Activated T-helper 1 cell treated with anti-CD3 and anti-CD28 coated beads, Interleukin-12 subunit alpha, Interleukin-12 subunit beta, Interleukin-2, Interleukin-4 antibody, amounts not matched to agents 30 ng/mL and 10 ng/mL and 1 ng/mL, durations not matched to agents 14 hours and 24 hours and 36 hours (primary cell): ENCODE measurements at regions of chr2 and their contacts with region 1.

Region 1: GRCh38 chr2:222707689-222708525 is 36.4 kb downstream of the MOGAT1 start:
- DNase-seq: peak; percentile 55
- H3K4me3 Mint-ChIP-seq: no peak overlapping the region
- H3K27ac Mint-ChIP-seq: no peak overlapping the region
- H3K4me1 Mint-ChIP-seq: peaks cover 11% of the 10 kb centered on the region
- H3K27me3 Mint-ChIP-seq: peaks cover 30% of the 10 kb centered on the region

Region 2: DNA sequence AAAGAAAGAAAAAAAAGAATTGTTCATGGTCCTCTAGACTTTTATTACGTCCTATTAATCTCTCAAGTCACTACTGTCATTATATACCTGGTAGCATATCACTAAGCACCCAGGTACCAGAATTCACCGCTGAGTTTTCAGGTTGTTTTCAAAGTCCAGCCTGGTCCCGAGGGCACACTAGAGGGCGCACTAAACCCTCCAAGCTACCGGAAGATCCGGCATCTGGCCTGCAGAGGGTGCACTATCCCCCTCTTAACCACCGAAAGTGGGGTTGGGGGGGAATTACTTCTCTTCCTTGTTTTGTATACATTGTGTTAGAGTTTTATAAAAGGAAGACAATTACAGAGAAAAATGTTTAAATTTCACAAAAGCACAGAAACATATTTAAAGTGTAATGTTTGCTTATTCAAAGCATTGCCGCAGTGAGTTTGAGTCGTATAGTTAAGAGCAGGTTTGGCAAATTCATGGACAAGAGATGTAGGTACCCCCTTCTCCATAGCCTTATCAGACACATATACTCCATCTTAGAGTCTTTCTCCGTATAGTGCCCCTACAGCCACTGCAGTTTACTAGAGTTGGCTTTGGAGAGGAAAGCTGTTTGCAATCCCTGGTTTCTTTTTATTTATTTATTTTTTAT is 17.2 kb before region 1 on chr2:
- intact Hi-C with region 1: loop called (anchors 1 kb)
- DNase-seq: peak; percentile 59
- H3K4me3 Mint-ChIP-seq: no peak overlapping the region
- H3K27ac Mint-ChIP-seq: no peak overlapping the region
- H3K4me1 Mint-ChIP-seq: peaks cover 5% of the 10 kb centered on the region
- H3K27me3 Mint-ChIP-seq: peaks cover 8% of the 10 kb centered on the region

Region 3: DNA sequence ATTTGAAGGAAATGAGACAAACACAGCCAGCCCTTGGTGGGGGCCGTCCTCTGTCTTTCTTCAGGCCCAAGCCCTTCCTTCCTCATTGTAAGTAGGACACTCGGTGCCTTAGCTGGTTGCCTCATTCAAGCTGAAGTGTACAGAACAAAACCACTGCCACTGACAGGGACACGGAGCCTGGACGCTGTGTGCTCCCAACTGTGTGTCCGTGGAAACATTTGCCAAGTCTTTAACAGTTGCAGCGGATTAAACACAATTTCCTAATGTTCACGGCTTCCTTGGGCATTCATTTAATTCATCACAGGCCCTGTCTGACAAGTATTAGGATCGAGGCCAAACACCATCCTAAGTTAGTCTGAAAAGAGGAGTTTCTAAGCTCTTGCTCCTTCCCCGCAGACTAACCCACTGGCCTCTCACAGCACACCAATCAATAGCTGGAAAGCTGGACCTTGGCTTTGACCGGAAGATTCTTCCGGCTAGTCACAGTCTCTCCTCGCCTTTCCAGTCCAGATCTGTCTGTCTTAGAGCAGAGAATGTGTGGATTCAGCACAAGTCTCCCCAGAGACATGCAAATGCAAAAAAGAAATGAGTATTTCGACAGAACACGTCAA is 84.2 kb after region 1 on chr2:
- intact Hi-C with region 1: loop called (anchors 1 kb)
- DNase-seq: no peak
- H3K4me3 Mint-ChIP-seq: no peak overlapping the region
- H3K27ac Mint-ChIP-seq: no peak overlapping the region
- H3K4me1 Mint-ChIP-seq: peaks cover 14% of the 10 kb centered on the region
- H3K27me3 Mint-ChIP-seq: peaks cover 20% of the 10 kb centered on the region

Region 4: GRCh38 chr2:222813177-222813843 is 105.4 kb after region 1 on chr2:
- intact Hi-C with region 1: loop called (anchors 2 kb)
- DNase-seq: no peak
- H3K4me3 Mint-ChIP-seq: peak overlapping the region; percentile 10
- H3K27ac Mint-ChIP-seq: peak overlapping the region; percentile 94
- H3K4me1 Mint-ChIP-seq: peaks cover 27% of the 10 kb centered on the region
- H3K27me3 Mint-ChIP-seq: peaks cover 7% of the 10 kb centered on the region

Region 5: DNA sequence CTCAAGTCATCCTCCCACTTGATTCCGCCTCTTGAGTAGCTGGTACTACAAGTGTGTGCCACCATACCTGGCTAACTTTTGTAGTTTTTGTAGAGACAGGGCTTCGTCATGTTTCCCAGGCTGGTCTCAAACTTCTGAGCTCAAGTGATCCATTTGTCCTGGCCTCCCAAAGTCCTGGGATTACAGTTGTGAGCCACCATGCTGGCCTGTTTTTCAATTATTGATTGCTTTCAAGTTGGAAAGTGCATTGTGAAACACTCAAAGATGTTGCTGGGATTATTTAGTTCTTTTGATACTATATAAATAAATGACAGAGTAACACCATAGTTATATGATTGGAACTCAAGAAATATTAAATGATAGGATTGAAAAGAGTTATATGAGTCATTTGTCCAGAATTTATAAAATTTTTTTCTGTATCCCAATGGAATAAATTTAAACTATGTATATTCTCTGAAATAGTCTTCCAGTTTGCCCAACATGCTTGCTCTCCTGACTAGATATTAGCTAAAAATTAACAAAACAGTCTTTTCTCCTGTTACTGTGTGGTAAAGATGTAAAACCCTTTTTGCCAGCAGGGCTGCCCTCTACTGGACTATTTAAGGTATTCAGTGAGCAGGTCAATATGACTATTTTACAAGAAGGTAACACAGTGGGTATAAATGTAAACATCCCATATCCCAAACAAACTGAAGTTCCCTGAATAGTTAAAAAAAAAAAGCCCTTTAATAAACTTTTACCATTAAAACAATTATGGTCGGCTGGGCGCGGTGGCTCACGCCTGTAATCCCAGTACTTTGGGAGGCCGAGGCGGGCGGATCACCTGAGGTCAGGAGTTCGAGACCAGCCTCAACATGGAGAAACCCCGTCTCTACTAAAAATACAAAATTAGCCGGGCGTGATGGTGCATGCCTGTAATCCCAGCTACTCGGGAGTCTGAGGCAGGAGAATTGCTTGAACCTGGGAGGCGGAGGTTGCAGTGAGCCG is 195.6 kb after region 1 on chr2:
- intact Hi-C with region 1: loop called (anchors 1 kb)
- DNase-seq: no peak
- H3K4me3 Mint-ChIP-seq: no peak overlapping the region
- H3K27ac Mint-ChIP-seq: no peak overlapping the region
- H3K4me1 Mint-ChIP-seq: peaks cover 15% of the 10 kb centered on the region
- H3K27me3 Mint-ChIP-seq: no peaks in the 10 kb centered on the region

Region 6: DNA sequence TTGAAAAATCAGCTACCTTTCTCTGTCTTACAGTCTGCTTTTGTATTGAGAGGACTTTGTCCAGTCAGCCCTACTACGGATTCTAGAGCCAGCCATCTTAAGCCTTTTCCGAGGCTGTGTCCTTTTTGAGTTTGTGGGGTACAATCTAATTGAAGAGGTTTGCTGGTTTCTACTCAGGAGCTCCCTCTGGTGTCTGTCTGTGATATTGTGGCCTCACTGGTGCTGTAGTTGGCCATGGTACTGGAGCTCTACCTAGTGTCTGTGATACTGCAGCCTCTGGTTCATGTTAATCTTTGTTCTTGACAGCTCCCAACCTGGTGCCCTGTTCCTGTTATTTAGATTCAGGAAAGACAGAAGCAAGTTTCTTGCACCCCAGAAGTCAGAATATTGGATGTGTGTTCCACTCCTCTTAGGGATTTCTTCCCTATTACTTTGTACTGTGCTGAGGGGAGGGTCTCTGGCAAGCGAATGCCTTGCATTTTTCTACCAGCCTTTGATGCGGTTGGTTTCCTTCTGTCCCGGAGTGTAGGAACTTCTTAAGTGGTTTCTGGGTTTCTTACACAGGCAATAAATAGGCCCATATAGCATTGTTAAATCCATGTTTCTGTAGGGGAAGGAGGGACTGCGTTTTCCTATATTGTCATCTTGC is 231.4 kb after region 1 on chr2:
- intact Hi-C with region 1: loop called (anchors 1 kb)
- DNase-seq: peak; percentile 55
- H3K4me3 Mint-ChIP-seq: no peak overlapping the region
- H3K27ac Mint-ChIP-seq: no peak overlapping the region
- H3K4me1 Mint-ChIP-seq: peaks cover 13% of the 10 kb centered on the region
- H3K27me3 Mint-ChIP-seq: no peaks in the 10 kb centered on the region